ENCODE measurements at regions of chr6 and their contacts with region 1.

Region 1: DNA sequence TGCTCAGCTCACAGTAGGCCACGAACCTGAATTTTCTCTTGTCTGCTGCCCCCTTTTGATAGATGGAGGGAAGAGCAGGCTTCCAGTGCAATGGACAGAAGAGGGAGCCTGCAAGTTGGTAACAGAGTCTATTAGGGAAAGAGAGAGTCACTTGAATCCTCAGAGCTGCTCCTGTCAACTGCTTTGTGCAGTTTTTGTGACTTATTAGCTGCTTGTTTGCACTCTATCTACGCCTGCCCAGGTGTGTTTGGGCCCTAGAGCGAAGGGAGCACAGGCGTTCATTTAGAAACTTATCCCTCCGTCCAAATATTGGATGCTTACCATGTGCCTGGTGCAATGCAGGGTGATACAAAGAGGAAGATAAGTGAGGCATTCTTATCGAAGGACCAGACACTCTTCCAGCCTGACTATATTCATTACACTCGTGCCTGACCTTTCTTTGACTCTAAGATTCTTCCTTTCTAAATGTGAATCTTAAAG is 11.6 kb upstream of the SLC2A12 start:
- DNase-seq: peak; percentile 75
- ATAC-seq: peak; percentile 96
- H3K4me3 ChIP-seq: peak overlapping the region in 2 of 3 experiments; percentile 25 to 26; a peak in 2 of 6 replicates
- H3K27ac ChIP-seq: no peak overlapping the region
- H3K4me1 ChIP-seq: 0 out of 2 replicates have a peak, but pooled peaks cover 15% of the 10 kb centered on the region
- H3K27me3 ChIP-seq: no peaks in the 10 kb centered on the region
- CTCF ChIP-seq: peak; percentile 89
- EP300 ChIP-seq: no peak
- POLR2A ChIP-seq: no peak
- RAD21 ChIP-seq: peak; percentile 65

Region 2: GRCh38 chr6:133973109-133973971 is 90.7 kb before region 1 on chr6:
- CTCF ChIA-PET with region 1: interaction called, 47 read pairs
- POLR2A ChIA-PET with region 1: interaction called, 4 read pairs
- in situ Hi-C with region 1: loop called (anchors 5 kb)
- intact Hi-C with region 1: loop called (anchors 1 kb)
- DNase-seq: peak; percentile 58
- ATAC-seq: peak; percentile 46; the same call in 2 of the 3 replicates
- H3K4me3 ChIP-seq: no peak overlapping the region
- H3K27ac ChIP-seq: no peak overlapping the region
- H3K4me1 ChIP-seq: no peaks in the 10 kb centered on the region
- H3K27me3 ChIP-seq: no peaks in the 10 kb centered on the region
- CTCF ChIP-seq: peak; percentile 71
- EP300 ChIP-seq: no peak
- POLR2A ChIP-seq: no peak
- RAD21 ChIP-seq: peak; percentile 56; the same call in 1 of the 2 replicates

Measured in HepG2 (cell line).